Aorta (tissue), 5 donors: ENCODE measurements at regions of chr11 and their contacts with region 1.

Region 1: GRCh38 chr11:44016131-44016530 is 31.6 kb upstream of the ACCSL start:
- DNase-seq: peak; percentile 91 to 93
- ATAC-seq: peak; percentile 84
- H3K4me3 ChIP-seq: no peak overlapping the region
- H3K27ac ChIP-seq: peak overlapping the region; percentile 88 to 91
- H3K4me1 ChIP-seq: peaks cover 3% of the 10 kb centered on the region in 2 donors
- H3K27me3 ChIP-seq: no peaks in the 10 kb centered on the region

Region 2: DNA sequence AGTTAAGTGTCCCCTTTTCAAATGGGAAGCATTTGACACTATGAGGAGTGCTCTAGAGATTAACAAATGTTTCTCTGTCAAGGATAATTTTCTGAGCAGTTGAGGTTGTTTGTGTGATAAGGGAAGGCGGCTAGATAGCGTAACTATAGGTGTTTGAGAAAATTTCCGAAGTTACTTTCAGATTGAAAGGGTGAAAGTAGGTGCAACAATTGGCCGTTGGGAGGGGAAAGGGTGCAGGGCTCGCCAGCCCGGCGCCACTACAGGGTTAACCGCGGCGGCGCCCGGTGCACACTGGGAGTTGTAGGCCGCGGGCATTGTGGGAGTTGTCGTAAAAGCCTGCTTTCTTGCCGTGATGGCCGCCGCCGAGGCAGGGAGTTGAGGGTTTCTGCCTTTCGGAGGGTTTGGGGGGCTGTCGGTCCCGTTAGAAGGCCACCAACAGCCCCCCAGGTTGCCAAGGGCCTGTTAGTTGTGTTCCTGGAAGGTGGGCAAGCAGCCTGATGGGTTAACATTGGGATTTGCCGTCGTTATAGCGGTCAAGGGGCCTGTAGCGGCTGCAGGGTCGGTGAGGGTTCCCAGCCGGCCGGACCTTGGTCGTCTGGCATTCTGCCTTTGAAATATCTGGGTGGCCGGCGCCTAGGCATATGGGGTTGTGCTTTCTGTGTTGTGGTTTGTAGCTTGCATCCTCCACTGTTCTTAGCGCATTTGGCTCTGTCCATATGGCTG is 372.1 kb before region 1 on chr11:
- intact Hi-C with region 1: no loop called
- DNase-seq: peak; percentile 90 to 94
- ATAC-seq: peak; percentile 99
- H3K4me3 ChIP-seq: peak overlapping the region; percentile 79 to 94
- H3K27ac ChIP-seq: no peak overlapping the region
- H3K4me1 ChIP-seq: peaks cover 0 to 6% of the 10 kb centered on the region in 2 donors
- H3K27me3 ChIP-seq: no peaks in the 10 kb centered on the region

Region 3: GRCh38 chr11:43738590-43739409 is 277.3 kb before region 1 on chr11:
- intact Hi-C with region 1: no loop called
- DNase-seq: no peak
- ATAC-seq: peak; percentile 47
- H3K4me3 ChIP-seq: no peak overlapping the region
- H3K27ac ChIP-seq: peak overlapping the region; percentile 43 to 64
- H3K4me1 ChIP-seq: peaks cover 3 to 19% of the 10 kb centered on the region in 2 donors
- H3K27me3 ChIP-seq: no peaks in the 10 kb centered on the region

Region 4: GRCh38 chr11:43856993-43857392 is 159.1 kb before region 1 on chr11:
- intact Hi-C with region 1: no loop called
- DNase-seq: no peak
- ATAC-seq: no peak
- H3K4me3 ChIP-seq: no peak overlapping the region
- H3K27ac ChIP-seq: no peak overlapping the region
- H3K4me1 ChIP-seq: no peaks in the 10 kb centered on the region
- H3K27me3 ChIP-seq: no peaks in the 10 kb centered on the region

Region 5: GRCh38 chr11:43962383-43963278 is 53.5 kb before region 1 on chr11:
- intact Hi-C with region 1: loop called in 1 of 2 experiments (anchors 5 kb)
- DNase-seq: peak in 1 of 2 donors; percentile 2
- ATAC-seq: peak; percentile 40
- H3K4me3 ChIP-seq: no peak overlapping the region
- H3K27ac ChIP-seq: peak overlapping the region; percentile 71 to 86
- H3K4me1 ChIP-seq: peaks cover 4 to 5% of the 10 kb centered on the region in 2 donors
- H3K27me3 ChIP-seq: no peaks in the 10 kb centered on the region

Region 6: GRCh38 chr11:44029977-44030911 is 14.1 kb after region 1 on chr11:
- intact Hi-C with region 1: loop called in 1 of 2 experiments (anchors 2 kb)
- DNase-seq: peak; percentile 83 to 88
- ATAC-seq: peak; percentile 85
- H3K4me3 ChIP-seq: no peak overlapping the region
- H3K27ac ChIP-seq: peak overlapping the region; percentile 98 to 100
- H3K4me1 ChIP-seq: peaks cover 0 to 11% of the 10 kb centered on the region in 2 donors
- H3K27me3 ChIP-seq: no peaks in the 10 kb centered on the region